ENCODE measurements at regions of chr10 and their contacts with region 1.

Region 1: GRCh38 chr10:21173812-21174714 is 277.0 kb upstream of the NEBL start:
- DNase-seq: peak; percentile 87 to 91
- H3K4me3 ChIP-seq: peak overlapping the region; percentile 91
- H3K4me3 Mint-ChIP-seq: peak overlapping the region; percentile 94
- H3K27ac Mint-ChIP-seq: peak overlapping the region; percentile 88
- H3K4me1 ChIP-seq: peaks cover 44% of the 10 kb centered on the region
- H3K4me1 Mint-ChIP-seq: peaks cover 40% of the 10 kb centered on the region
- H3K27me3 ChIP-seq: no peaks in the 10 kb centered on the region
- H3K27me3 Mint-ChIP-seq: no peaks in the 10 kb centered on the region
- CTCF ChIP-seq: peak in 1 of 2 experiments; percentile 23

Region 2: GRCh38 chr10:21078410-21079329 is 95.4 kb before region 1 on chr10:
- CTCF ChIA-PET with region 1: interaction called, 3 read pairs
- POLR2A ChIA-PET with region 1: no interaction called
- intact Hi-C with region 1: loop called (anchors 1 kb)
- DNase-seq: peak; percentile 78 to 84
- H3K4me3 ChIP-seq: no peak overlapping the region
- H3K4me3 Mint-ChIP-seq: no peak overlapping the region
- H3K27ac Mint-ChIP-seq: peak overlapping the region; percentile 23
- H3K4me1 ChIP-seq: 0 out of 2 replicates have a peak, but pooled peaks cover 6% of the 10 kb centered on the region
- H3K4me1 Mint-ChIP-seq: peaks cover 15% of the 10 kb centered on the region
- H3K27me3 ChIP-seq: no peaks in the 10 kb centered on the region
- H3K27me3 Mint-ChIP-seq: no peaks in the 10 kb centered on the region
- CTCF ChIP-seq: peak; percentile 92 to 97

Region 3: GRCh38 chr10:21161647-21162046 is 12.4 kb before region 1 on chr10:
- CTCF ChIA-PET with region 1: interaction called, 5 read pairs
- POLR2A ChIA-PET with region 1: interaction called, 4 read pairs
- intact Hi-C with region 1: loop called (anchors 1 kb)
- DNase-seq: peak; percentile 61 to 66
- H3K4me3 ChIP-seq: no peak overlapping the region
- H3K4me3 Mint-ChIP-seq: no peak overlapping the region
- H3K27ac Mint-ChIP-seq: peak overlapping the region; percentile 66
- H3K4me1 ChIP-seq: peaks cover 59% of the 10 kb centered on the region
- H3K4me1 Mint-ChIP-seq: peaks cover 57% of the 10 kb centered on the region
- H3K27me3 ChIP-seq: no peaks in the 10 kb centered on the region
- H3K27me3 Mint-ChIP-seq: no peaks in the 10 kb centered on the region
- CTCF ChIP-seq: no peak

Region 4: DNA sequence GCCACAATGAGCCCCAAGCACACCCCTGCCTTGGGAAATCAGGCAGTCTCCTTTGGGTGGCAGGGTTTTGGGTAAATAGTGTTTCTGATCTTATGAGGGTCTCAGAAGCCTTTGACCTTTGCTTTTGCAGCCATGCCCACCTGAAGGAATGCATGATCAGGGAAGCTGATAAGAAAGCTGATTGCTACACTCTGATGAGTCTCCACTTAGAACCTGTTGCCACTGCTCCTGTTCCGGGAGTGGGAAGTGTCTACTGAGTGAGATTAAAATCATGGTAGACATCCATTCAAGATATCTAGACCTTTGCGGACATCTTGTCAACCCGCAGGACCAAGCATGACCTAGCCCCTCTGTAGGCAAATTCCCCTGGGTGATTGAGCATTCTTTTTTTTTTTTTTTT is 68.9 kb after region 1 on chr10:
- CTCF ChIA-PET with region 1: interaction called, 15 read pairs
- POLR2A ChIA-PET with region 1: interaction called, 4 read pairs
- intact Hi-C with region 1: loop called (anchors 2 kb)
- DNase-seq: peak; percentile 62 to 71
- H3K4me3 ChIP-seq: no peak overlapping the region
- H3K4me3 Mint-ChIP-seq: peak overlapping the region; percentile 61
- H3K27ac Mint-ChIP-seq: peak overlapping the region; percentile 84
- H3K4me1 ChIP-seq: peaks cover 19% of the 10 kb centered on the region
- H3K4me1 Mint-ChIP-seq: peaks cover 26% of the 10 kb centered on the region
- H3K27me3 ChIP-seq: no peaks in the 10 kb centered on the region
- H3K27me3 Mint-ChIP-seq: no peaks in the 10 kb centered on the region
- CTCF ChIP-seq: no peak